CD8-positive, alpha-beta memory T cell (primary cell): ENCODE measurements at regions of chr12 and their contacts with region 1.

Region 1: DNA sequence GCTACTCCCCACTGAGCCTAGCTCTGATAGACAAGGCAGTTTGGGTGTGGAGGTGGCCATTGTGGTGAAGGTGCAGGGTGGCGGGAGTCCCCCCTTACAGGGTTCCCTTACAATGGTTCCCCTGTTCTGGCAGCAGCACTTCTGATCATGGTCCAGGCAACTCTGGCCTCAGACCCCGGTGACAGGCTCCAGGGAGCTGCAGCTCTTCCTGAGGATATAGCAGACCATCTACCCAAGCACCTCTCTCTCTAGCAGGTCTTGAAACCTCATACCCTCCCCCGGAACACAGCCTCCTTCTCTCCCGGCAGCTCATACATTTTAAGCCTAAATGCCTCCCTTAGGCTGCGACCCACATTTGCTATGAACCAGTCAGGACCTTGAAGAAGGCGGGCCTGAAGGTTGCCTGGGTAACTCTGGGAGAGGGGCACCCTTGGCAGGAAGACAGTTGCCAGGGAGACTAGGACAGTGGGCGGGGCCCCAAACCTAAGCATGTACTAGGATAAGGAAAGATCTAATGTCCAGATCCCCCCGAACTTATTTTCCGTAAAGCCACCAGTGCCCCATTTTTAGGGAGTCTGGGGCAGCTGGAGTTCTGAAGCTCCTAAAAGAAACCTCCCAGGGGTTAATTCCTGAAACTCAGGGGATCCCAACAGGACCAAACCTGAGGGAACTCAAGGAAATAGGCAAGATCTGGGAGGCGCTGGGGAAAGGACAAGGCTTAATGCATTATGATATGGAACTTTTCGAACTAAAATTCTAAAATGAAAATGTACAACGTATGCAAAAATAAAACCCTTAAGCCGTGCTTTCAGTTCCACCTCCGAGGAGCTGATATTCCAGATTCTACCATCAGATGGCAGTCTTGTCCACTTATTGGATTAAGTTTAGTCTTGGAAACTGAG is 4.5 kb upstream of the GDF11 start:
- DNase-seq: peak; percentile 48 to 85 (median 75)
- H3K4me3 ChIP-seq: peak overlapping the region; percentile 95
- H3K4me3 Mint-ChIP-seq: peak overlapping the region; percentile 81 to 96 (median 85)
- H3K27ac ChIP-seq: peak overlapping the region; percentile 82
- H3K27ac Mint-ChIP-seq: peak overlapping the region; percentile 91 to 98 (median 92)
- H3K4me1 ChIP-seq: peaks cover 25% of the 10 kb centered on the region
- H3K4me1 Mint-ChIP-seq: peaks cover 26 to 38% (median 27%) of the 10 kb centered on the region in 3 donors
- H3K27me3 ChIP-seq: no peaks in the 10 kb centered on the region
- H3K27me3 Mint-ChIP-seq: no peaks in the 10 kb centered on the region

Region 2: DNA sequence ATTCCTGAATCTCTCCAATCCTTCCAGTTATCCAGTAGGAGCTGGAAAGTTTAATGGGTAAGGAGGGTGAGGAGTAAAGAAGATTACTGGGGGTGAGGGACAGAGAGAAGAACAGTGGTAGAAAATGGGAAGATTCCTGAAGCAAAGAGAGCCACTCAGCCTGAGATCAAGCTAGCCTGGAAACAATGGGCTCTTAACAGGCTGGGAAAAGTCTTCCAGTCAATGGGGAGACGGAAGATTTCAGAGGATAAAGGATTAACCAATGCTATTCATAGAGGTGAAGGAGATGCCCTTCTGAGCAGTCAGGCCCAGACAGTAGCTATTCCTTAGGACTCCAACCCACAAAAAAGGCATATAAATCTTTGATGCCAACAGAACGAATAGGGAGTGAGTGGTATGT is 19.3 kb after region 1 on chr12:
- CTCF ChIA-PET with region 1: interaction called, 16 read pairs
- POLR2A ChIA-PET with region 1: no interaction called
- DNase-seq: no peak
- H3K4me3 ChIP-seq: no peak overlapping the region
- H3K4me3 Mint-ChIP-seq: no peak overlapping the region
- H3K27ac ChIP-seq: no peak overlapping the region
- H3K27ac Mint-ChIP-seq: peak overlapping the region in 7 of 8 donors; percentile 11 to 92 (median 54)
- H3K4me1 ChIP-seq: no peaks in the 10 kb centered on the region
- H3K4me1 Mint-ChIP-seq: peaks cover 2 to 12% (median 4%) of the 10 kb centered on the region in 3 donors
- H3K27me3 ChIP-seq: no peaks in the 10 kb centered on the region
- H3K27me3 Mint-ChIP-seq: no peaks in the 10 kb centered on the region

Region 3: GRCh38 chr12:55817346-55818139 is 79.2 kb after region 1 on chr12 and contains the starts of genes ORMDL2 and SARNP:
- CTCF ChIA-PET with region 1: interaction called, 35 read pairs
- POLR2A ChIA-PET with region 1: no interaction called
- DNase-seq: peak; percentile 91 to 99 (median 98)
- H3K4me3 ChIP-seq: peak within 1 kb of the TSS; percentile 94
- H3K4me3 Mint-ChIP-seq: no peak within 1 kb of the TSS
- H3K27ac ChIP-seq: peak within 1 kb of the TSS; percentile 86
- H3K27ac Mint-ChIP-seq: no peak within 1 kb of the TSS
- H3K4me1 ChIP-seq: peaks cover 39% of the 10 kb centered on the region
- H3K4me1 Mint-ChIP-seq: peaks cover 27 to 39% (median 36%) of the 10 kb centered on the region in 3 donors
- H3K27me3 ChIP-seq: no peaks in the 10 kb centered on the region
- H3K27me3 Mint-ChIP-seq: no peaks in the 10 kb centered on the region
- total RNA-seq, gene ORMDL2: 49.0 to 49.7 TPM
- total RNA-seq, gene SARNP: 89.7 to 103 TPM

Region 4: GRCh38 chr12:55940065-55940732 is 201.8 kb after region 1 on chr12:
- CTCF ChIA-PET with region 1: interaction called, 78 read pairs
- POLR2A ChIA-PET with region 1: interaction called, 4 read pairs
- DNase-seq: peak; percentile 71 to 88 (median 78)
- H3K4me3 ChIP-seq: no peak overlapping the region
- H3K4me3 Mint-ChIP-seq: peak overlapping the region in 4 of 7 donors; percentile 24 to 60 (median 45)
- H3K27ac ChIP-seq: no peak overlapping the region
- H3K27ac Mint-ChIP-seq: peak overlapping the region; percentile 67 to 97 (median 90)
- H3K4me1 ChIP-seq: peaks cover 71% of the 10 kb centered on the region
- H3K4me1 Mint-ChIP-seq: peaks cover 60 to 80% (median 80%) of the 10 kb centered on the region in 3 donors
- H3K27me3 ChIP-seq: no peaks in the 10 kb centered on the region
- H3K27me3 Mint-ChIP-seq: no peaks in the 10 kb centered on the region